PC-9 (cell line): ENCODE measurements at regions of chr2 and their contacts with region 1.

Region 1: GRCh38 chr2:47323009-47323821 is 79.7 kb upstream of the MSH2 start:
- DNase-seq: peak; percentile 77 to 90
- H3K4me3 ChIP-seq: no peak overlapping the region; the same call in 1 of the 2 replicates
- H3K27ac ChIP-seq: peak overlapping the region; percentile 30
- H3K4me1 ChIP-seq: peaks cover 45% of the 10 kb centered on the region
- H3K27me3 ChIP-seq: no peaks in the 10 kb centered on the region
- CTCF ChIP-seq: peak; percentile 100

Region 2: GRCh38 chr2:46850777-46851176 is 472.4 kb before region 1 on chr2:
- CTCF ChIA-PET with region 1: interaction called, 12 read pairs
- POLR2A ChIA-PET with region 1: no interaction called
- intact Hi-C with region 1: no loop called
- DNase-seq: peak; percentile 67 to 75
- H3K4me3 ChIP-seq: no peak overlapping the region
- H3K27ac ChIP-seq: peak overlapping the region; percentile 45
- H3K4me1 ChIP-seq: peaks cover 77% of the 10 kb centered on the region
- H3K27me3 ChIP-seq: no peaks in the 10 kb centered on the region
- CTCF ChIP-seq: no peak

Region 3: GRCh38 chr2:46915811-46916630 is 407.2 kb before region 1 on chr2:
- CTCF ChIA-PET with region 1: no interaction called
- POLR2A ChIA-PET with region 1: no interaction called
- intact Hi-C with region 1: loop called (anchors 5 kb)
- DNase-seq: peak; percentile 93
- H3K4me3 ChIP-seq: peak overlapping the region; percentile 76
- H3K27ac ChIP-seq: peak overlapping the region; percentile 75
- H3K4me1 ChIP-seq: peaks cover 60% of the 10 kb centered on the region
- H3K27me3 ChIP-seq: no peaks in the 10 kb centered on the region
- CTCF ChIP-seq: no peak

Region 4: DNA sequence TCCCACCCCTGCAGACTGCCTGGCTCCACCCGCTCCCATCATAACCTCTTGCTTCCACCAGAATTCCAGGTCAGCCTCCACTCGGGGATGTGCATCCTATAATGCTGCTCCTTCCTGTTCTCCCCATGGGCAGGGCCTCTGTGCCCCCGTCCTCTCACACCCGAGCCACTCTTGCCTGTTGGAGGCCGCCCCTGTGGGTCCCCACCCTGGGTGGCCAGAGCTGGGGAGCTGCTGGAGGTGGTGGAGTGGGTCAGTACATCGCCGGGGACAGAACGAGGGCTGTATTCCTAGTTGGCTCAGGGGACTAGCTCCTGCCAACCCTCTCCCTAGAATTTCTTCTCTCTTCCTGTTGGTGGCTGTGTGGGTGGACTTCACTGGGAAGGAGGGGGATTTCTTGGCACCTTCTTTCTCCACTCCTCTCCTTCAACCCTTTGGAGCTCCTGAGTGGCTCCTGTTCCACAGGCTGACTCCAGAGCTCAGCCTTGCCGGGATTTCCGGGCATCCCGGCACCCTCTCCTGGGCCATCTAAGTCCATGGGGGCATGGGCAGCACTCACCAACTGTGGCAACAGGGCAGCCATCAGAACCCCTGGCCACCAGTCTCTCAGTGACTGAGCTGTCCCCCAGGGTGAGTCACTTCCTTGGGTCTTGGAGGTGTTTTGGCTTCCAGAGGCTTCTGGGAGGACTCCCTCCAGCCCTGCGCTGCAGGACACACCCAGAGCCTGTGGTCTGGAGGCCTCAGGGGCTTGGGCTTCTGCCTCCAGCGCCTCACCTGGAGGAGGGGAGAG is 319.4 kb before region 1 on chr2:
- CTCF ChIA-PET with region 1: interaction called, 12 read pairs
- POLR2A ChIA-PET with region 1: interaction called, 5 read pairs
- intact Hi-C with region 1: no loop called
- DNase-seq: peak; percentile 70 to 75
- H3K4me3 ChIP-seq: no peak overlapping the region
- H3K27ac ChIP-seq: peak overlapping the region; percentile 26
- H3K4me1 ChIP-seq: peaks cover 24% of the 10 kb centered on the region
- H3K27me3 ChIP-seq: no peaks in the 10 kb centered on the region
- CTCF ChIP-seq: no peak

Region 5: GRCh38 chr2:47272031-47272864 is 51.0 kb before region 1 on chr2:
- CTCF ChIA-PET with region 1: no interaction called
- POLR2A ChIA-PET with region 1: interaction called, 21 read pairs
- intact Hi-C with region 1: loop called (anchors 2 kb)
- DNase-seq: peak; percentile 79 to 92
- H3K4me3 ChIP-seq: peak overlapping the region; percentile 56; the same call in 1 of the 2 replicates
- H3K27ac ChIP-seq: peak overlapping the region; percentile 99
- H3K4me1 ChIP-seq: peaks cover 62% of the 10 kb centered on the region
- H3K27me3 ChIP-seq: no peaks in the 10 kb centered on the region
- CTCF ChIP-seq: peak; percentile 100